ENCODE measurements at regions of chr11 and their contacts with region 1.

Region 1: GRCh38 chr11:87037450-87038234 is at the start of gene TMEM135:
- DNase-seq: peak; percentile 92
- H3K4me3 ChIP-seq: peak within 1 kb of the TSS; percentile 75 to 91 (median 85)
- H3K27ac ChIP-seq: peak within 1 kb of the TSS; percentile 65
- H3K4me1 ChIP-seq: peaks cover 14% of the 10 kb centered on the region
- H3K27me3 ChIP-seq: no peaks in the 10 kb centered on the region
- CTCF ChIP-seq: peak in 1 of 2 donors; percentile 18
- total RNA-seq, gene TMEM135: 30.8 to 37.3 TPM

Region 2: DNA sequence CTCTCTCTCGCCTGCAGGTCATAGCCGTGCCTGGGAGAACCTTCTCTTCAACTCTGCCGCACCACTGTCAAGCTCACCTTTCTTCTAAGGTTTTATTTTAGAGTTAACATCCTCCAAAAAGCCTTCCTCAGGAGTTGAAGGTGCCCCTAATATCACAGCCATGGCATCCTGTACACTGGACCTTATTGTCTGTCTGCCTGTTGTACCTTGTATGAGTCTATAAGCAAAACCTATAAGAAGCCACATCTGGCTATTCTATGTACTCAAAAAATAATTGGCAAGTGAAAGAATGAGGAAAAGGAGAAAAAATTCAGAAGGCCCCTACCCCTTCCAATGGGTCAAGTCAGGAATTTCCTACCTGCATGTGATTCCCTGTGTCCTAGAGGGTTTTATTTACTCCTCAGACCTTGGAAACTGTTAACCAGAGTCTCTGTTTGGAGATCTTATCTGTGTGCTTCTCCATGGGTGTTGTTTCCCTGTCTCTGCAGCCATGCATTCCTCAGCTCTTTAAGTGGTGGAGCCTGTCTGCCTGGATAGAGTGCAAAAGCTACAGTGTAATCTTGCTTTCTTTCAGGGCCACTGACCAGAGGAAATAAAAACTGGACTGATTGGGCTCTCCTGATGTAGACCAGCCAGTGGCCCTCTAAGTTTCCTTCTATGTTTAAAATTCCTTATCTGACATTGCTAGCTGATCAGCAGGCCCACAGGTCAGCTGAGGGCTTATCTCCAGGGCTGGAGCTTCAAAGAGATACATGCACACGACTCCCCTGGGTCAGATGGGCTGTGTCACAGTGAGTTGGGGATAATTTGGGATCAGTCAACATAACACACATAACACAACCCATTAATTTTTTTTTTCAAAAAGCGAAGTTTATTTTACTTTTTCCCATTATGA is 37.5 kb before region 1 on chr11:
- CTCF ChIA-PET with region 1: interaction called, 5 read pairs
- dilution Hi-C with region 1: no loop called
- in situ Hi-C with region 1: no loop called
- intact Hi-C with region 1: loop called (anchors 5 kb)
- DNase-seq: peak; percentile 35
- H3K4me3 ChIP-seq: no peak overlapping the region
- H3K27ac ChIP-seq: no peak overlapping the region
- H3K4me1 ChIP-seq: no peaks in the 10 kb centered on the region
- H3K27me3 ChIP-seq: no peaks in the 10 kb centered on the region
- CTCF ChIP-seq: no peak